ENCODE measurements at regions of chr1 and their contacts with region 1.

Region 1: DNA sequence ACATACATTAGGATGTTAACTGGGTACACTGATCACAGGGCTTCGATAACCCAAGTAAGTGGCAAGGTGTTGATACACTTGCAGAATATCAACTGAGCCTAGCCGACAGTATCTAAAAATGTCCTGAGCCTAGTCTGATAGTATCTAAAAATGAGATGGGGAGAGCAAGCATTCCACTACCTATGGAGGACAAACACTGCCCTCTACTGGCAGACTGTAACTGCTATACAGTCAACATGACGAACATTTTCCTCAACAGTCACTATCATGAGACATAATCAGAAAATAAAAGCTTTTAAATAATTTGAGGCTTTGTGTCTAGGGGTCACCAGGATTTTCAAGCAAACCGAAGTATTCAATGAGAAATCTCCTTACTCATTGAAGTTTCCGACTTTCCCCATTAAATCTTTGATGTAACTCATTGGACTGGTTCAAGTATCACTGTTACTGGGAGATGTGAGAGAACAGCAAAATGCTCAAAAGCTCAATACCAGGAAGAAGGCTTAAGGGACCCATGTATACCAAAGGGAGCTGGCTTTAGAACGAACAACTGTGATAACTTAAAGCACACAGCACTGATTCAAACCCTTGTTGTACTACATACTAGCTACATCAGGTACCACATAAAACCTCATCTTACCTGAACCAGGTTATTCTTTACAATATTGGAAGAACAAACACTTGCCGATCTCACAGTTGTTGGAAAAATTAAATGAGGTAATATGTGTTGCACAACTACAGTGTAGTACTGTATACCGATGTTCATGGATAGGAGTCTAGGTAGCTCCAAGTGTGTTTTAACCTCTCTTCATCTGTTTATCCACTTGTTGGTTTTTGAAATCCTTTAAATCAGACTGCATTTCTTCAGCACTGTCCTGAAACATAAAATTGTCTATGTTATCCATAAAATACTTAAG is 31.1 kb upstream of the SLC45A3 start:
- DNase-seq: peak; percentile 78
- ATAC-seq: peak; percentile 90
- H3K4me3 Mint-ChIP-seq: no peak overlapping the region
- H3K27ac Mint-ChIP-seq: peak overlapping the region; percentile 43
- H3K4me1 Mint-ChIP-seq: peaks cover 13% of the 10 kb centered on the region
- H3K27me3 Mint-ChIP-seq: no peaks in the 10 kb centered on the region

Region 2: DNA sequence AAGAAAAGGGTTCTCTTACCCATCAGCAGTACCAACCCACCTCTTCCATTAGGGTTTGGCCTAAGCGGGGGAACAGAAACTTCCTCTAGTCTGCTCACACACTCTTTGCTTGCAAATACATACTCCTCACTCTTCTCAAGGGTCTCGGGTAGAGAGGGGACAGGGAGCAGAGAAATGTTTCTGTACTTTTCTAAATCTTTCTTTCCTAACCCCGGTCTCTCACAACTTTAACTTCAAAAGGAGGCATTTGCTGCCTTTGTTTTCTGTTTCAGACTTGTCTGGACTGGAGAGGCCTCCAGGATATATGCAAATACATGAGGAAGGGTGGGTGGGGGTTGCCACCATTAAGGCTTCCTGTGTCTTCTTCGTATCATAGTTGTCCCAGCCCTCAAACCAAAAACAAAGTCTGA is 1956.9 kb before region 1 on chr1:
- CTCF ChIA-PET with region 1: no interaction called
- POLR2A ChIA-PET with region 1: no interaction called
- intact Hi-C with region 1: no loop called
- DNase-seq: peak; percentile 45
- ATAC-seq: peak; percentile 82
- H3K4me3 Mint-ChIP-seq: peak overlapping the region; percentile 4
- H3K27ac Mint-ChIP-seq: peak overlapping the region; percentile 88
- H3K4me1 Mint-ChIP-seq: peaks cover 29% of the 10 kb centered on the region
- H3K27me3 Mint-ChIP-seq: no peaks in the 10 kb centered on the region

Region 3: GRCh38 chr1:205680073-205680851 is 31.1 kb before region 1 on chr1 and contains the start of gene SLC45A3:
- CTCF ChIA-PET with region 1: interaction called, 29 read pairs
- POLR2A ChIA-PET with region 1: interaction called, 5 read pairs
- intact Hi-C with region 1: no loop called
- DNase-seq: peak; percentile 51
- ATAC-seq: peak; percentile 79
- H3K4me3 Mint-ChIP-seq: peak within 1 kb of the TSS; percentile 66
- H3K27ac Mint-ChIP-seq: no peak within 1 kb of the TSS
- H3K4me1 Mint-ChIP-seq: peaks cover 8% of the 10 kb centered on the region
- H3K27me3 Mint-ChIP-seq: peaks cover 17% of the 10 kb centered on the region
- total RNA-seq, gene SLC45A3: 0.32 to 0.53 TPM

Region 4: DNA sequence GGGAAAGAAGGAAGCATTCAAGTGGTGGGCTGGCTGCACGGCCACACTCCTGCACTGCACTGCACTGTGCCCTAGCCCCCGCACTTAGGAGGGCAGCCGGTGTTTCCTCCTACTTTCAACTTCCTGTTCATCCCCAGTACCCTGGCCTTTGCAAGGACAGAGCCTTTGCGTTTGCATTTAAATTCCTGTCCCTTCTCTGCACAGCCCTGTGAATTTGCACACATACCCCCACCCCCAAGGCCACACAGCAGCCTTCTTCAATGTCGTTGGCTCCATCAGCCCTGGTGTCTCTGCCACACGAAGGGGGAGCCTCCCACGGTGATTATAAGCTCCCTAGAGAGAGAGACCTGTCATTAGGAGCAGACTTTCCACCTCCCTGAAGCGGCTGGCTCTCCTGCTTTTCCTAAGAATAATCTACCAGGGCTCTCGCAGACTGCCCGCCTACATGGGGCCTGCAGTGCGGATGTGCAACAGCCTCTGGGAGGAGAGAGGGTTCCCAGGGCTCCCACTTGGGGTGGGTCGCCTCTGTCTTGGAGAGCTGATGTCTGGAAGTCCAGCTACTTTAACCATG is 17.9 kb before region 1 on chr1:
- CTCF ChIA-PET with region 1: interaction called, 14 read pairs
- POLR2A ChIA-PET with region 1: no interaction called
- intact Hi-C with region 1: no loop called
- DNase-seq: no peak
- ATAC-seq: no peak
- H3K4me3 Mint-ChIP-seq: no peak overlapping the region
- H3K27ac Mint-ChIP-seq: no peak overlapping the region
- H3K4me1 Mint-ChIP-seq: no peaks in the 10 kb centered on the region
- H3K27me3 Mint-ChIP-seq: peaks cover 9% of the 10 kb centered on the region

Region 5: DNA sequence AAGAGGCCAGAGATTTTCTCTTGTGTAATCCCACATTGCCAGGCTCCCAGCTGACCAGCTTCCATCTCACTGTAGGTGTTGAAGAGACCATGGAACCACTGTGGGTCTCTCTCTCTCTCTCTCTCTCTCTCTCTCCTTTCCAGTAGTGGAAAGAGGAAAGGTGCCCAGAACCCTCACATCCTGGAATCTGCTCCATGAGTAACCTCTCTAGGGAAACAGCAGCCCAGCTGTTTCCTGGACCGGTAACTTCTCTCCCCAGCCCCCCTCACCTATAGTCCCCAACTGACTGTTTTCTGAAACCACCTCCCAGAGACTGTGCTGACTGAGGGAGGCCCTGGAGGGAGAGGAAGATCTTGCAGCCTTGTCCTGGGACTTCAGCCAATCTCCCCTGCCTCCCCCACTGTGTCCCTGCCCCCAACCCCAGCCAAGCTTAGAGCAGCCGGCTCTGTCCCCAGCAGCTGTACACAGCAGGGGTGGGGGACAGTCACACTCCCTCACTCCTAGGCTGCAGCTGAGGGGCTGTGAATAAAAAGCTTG is 10.4 kb before region 1 on chr1:
- CTCF ChIA-PET with region 1: interaction called, 17 read pairs
- POLR2A ChIA-PET with region 1: no interaction called
- intact Hi-C with region 1: no loop called
- DNase-seq: no peak
- ATAC-seq: no peak
- H3K4me3 Mint-ChIP-seq: no peak overlapping the region
- H3K27ac Mint-ChIP-seq: no peak overlapping the region
- H3K4me1 Mint-ChIP-seq: peaks cover 4% of the 10 kb centered on the region
- H3K27me3 Mint-ChIP-seq: peaks cover 6% of the 10 kb centered on the region

Region 6: GRCh38 chr1:205729945-205730610 is 18.7 kb after region 1 on chr1:
- CTCF ChIA-PET with region 1: interaction called, 62 read pairs
- POLR2A ChIA-PET with region 1: no interaction called
- intact Hi-C with region 1: no loop called
- DNase-seq: no peak
- ATAC-seq: no peak
- H3K4me3 Mint-ChIP-seq: no peak overlapping the region
- H3K27ac Mint-ChIP-seq: peak overlapping the region; percentile 16
- H3K4me1 Mint-ChIP-seq: peaks cover 34% of the 10 kb centered on the region
- H3K27me3 Mint-ChIP-seq: no peaks in the 10 kb centered on the region